Caco-2 (cell line): ENCODE measurements at regions of chr4 and their contacts with region 1.

Region 1: DNA sequence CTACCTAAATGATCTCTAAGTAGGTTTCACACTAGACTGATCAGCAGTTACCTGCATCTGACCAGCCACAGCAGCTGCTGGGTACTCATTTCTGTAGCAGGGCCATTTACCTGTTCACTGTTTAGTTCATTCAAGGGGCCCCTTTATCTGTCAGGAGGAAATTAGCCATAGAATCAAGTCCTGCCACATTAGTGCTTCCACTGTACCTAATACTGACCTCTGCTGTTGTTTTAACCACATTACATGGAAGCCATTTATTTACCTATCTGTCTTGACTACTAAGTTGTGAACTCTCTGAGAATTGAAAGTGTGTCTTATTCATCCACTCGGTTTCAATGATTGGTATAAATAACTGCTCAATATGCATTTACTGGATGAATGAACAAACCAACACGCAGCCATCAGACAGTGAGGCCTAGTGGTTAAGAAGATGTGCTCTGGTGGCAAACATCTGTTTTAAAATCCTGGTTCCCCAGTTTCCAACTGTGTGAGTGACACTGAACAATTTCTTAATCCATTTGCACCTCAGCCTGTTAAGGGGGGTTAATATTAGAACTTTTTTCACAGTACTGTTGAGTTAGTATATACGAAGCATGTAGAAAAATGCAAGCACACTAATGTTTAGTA is 30.0 kb upstream of the ANXA5 start:
- DNase-seq: peak in 1 of 2 experiments; percentile 62
- H3K4me3 ChIP-seq: no peak overlapping the region
- H3K4me3 Mint-ChIP-seq: no peak overlapping the region
- H3K27ac Mint-ChIP-seq: no peak overlapping the region
- H3K4me1 ChIP-seq: peaks cover 6% of the 10 kb centered on the region; the same call in 1 of the 2 replicates
- H3K4me1 Mint-ChIP-seq: peaks cover 17% of the 10 kb centered on the region
- H3K27me3 ChIP-seq: no peaks in the 10 kb centered on the region
- H3K27me3 Mint-ChIP-seq: no peaks in the 10 kb centered on the region
- CTCF ChIP-seq: peak; percentile 58 to 63

Region 2: GRCh38 chr4:120446051-120446567 is 1280.6 kb before region 1 on chr4:
- CTCF ChIA-PET with region 1: no interaction called
- POLR2A ChIA-PET with region 1: no interaction called
- intact Hi-C with region 1: no loop called
- DNase-seq: no peak
- H3K4me3 ChIP-seq: no peak overlapping the region
- H3K4me3 Mint-ChIP-seq: no peak overlapping the region
- H3K27ac Mint-ChIP-seq: no peak overlapping the region
- H3K4me1 ChIP-seq: no peaks in the 10 kb centered on the region
- H3K4me1 Mint-ChIP-seq: no peaks in the 10 kb centered on the region
- H3K27me3 ChIP-seq: no peaks in the 10 kb centered on the region
- H3K27me3 Mint-ChIP-seq: peaks cover 2% of the 10 kb centered on the region
- CTCF ChIP-seq: no peak

Region 3: GRCh38 chr4:121370729-121371325 is 355.9 kb before region 1 on chr4:
- CTCF ChIA-PET with region 1: no interaction called
- POLR2A ChIA-PET with region 1: no interaction called
- intact Hi-C with region 1: loop called (anchors 2 kb)
- DNase-seq: peak in 1 of 2 experiments; percentile 43
- H3K4me3 ChIP-seq: no peak overlapping the region
- H3K4me3 Mint-ChIP-seq: no peak overlapping the region
- H3K27ac Mint-ChIP-seq: no peak overlapping the region
- H3K4me1 ChIP-seq: no peaks in the 10 kb centered on the region
- H3K4me1 Mint-ChIP-seq: no peaks in the 10 kb centered on the region
- H3K27me3 ChIP-seq: no peaks in the 10 kb centered on the region
- H3K27me3 Mint-ChIP-seq: peaks cover 9% of the 10 kb centered on the region
- CTCF ChIP-seq: peak; percentile 51 to 52

Region 4: DNA sequence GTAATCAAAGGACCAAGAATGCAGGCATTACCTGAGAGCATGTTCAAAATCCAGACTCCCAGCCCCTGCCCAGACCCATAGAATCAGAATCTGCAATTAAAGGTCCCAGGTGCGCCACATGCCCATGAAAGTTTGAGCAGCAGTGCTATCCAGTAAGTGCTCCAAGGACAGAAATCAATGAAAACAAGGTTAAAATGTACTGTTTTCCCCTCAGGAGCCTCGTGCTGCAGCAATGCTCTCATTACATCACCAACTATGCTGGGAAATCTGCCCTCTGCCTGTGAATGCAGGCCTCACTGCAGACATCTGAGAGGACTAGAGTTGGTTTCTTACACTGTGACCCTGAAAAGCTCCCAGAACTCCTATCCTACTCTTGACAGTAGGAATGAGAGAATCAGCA is 51.0 kb before region 1 on chr4:
- CTCF ChIA-PET with region 1: no interaction called
- POLR2A ChIA-PET with region 1: no interaction called
- intact Hi-C with region 1: loop called (anchors 1 kb)
- DNase-seq: peak in 1 of 2 experiments; percentile 26
- H3K4me3 ChIP-seq: no peak overlapping the region
- H3K4me3 Mint-ChIP-seq: no peak overlapping the region
- H3K27ac Mint-ChIP-seq: no peak overlapping the region
- H3K4me1 ChIP-seq: peaks cover 48% of the 10 kb centered on the region
- H3K4me1 Mint-ChIP-seq: peaks cover 31% of the 10 kb centered on the region
- H3K27me3 ChIP-seq: no peaks in the 10 kb centered on the region
- H3K27me3 Mint-ChIP-seq: no peaks in the 10 kb centered on the region
- CTCF ChIP-seq: peak in 1 of 2 experiments; percentile 21

Region 5: GRCh38 chr4:121696581-121697461 is 29.9 kb before region 1 on chr4 and contains the start of gene ANXA5:
- CTCF ChIA-PET with region 1: interaction called, 3 read pairs
- POLR2A ChIA-PET with region 1: no interaction called
- intact Hi-C with region 1: loop called (anchors 1 kb)
- DNase-seq: peak; percentile 80 to 90
- H3K4me3 ChIP-seq: peak within 1 kb of the TSS; percentile 80
- H3K4me3 Mint-ChIP-seq: peak within 1 kb of the TSS; percentile 94
- H3K27ac Mint-ChIP-seq: peak within 1 kb of the TSS; percentile 96
- H3K4me1 ChIP-seq: peaks cover 26% of the 10 kb centered on the region
- H3K4me1 Mint-ChIP-seq: no peaks in the 10 kb centered on the region
- H3K27me3 ChIP-seq: no peaks in the 10 kb centered on the region
- H3K27me3 Mint-ChIP-seq: no peaks in the 10 kb centered on the region
- CTCF ChIP-seq: peak in 1 of 2 experiments; percentile 37
- total RNA-seq, gene ANXA5: 328 and 359 TPM in 2 replicates

Region 6: GRCh38 chr4:121711263-121712000 is 15.3 kb before region 1 on chr4:
- CTCF ChIA-PET with region 1: no interaction called
- POLR2A ChIA-PET with region 1: no interaction called
- intact Hi-C with region 1: loop called (anchors 1 kb)
- DNase-seq: peak; percentile 80
- H3K4me3 ChIP-seq: peak overlapping the region; percentile 23
- H3K4me3 Mint-ChIP-seq: peak overlapping the region; percentile 81
- H3K27ac Mint-ChIP-seq: peak overlapping the region; percentile 91
- H3K4me1 ChIP-seq: peaks cover 5% of the 10 kb centered on the region; the same call in 1 of the 2 replicates
- H3K4me1 Mint-ChIP-seq: peaks cover 26% of the 10 kb centered on the region
- H3K27me3 ChIP-seq: no peaks in the 10 kb centered on the region
- H3K27me3 Mint-ChIP-seq: no peaks in the 10 kb centered on the region
- CTCF ChIP-seq: no peak